B cell (primary cell): ENCODE measurements at regions of chr1 and their contacts with region 1.

Region 1: GRCh38 chr1:84083307-84083706 is 60.8 kb upstream of the PRKACB start:
- DNase-seq: no peak
- ATAC-seq: no peak
- H3K4me3 ChIP-seq: no peak overlapping the region
- H3K4me3 Mint-ChIP-seq: no peak overlapping the region
- H3K27ac ChIP-seq: no peak overlapping the region
- H3K27ac Mint-ChIP-seq: no peak overlapping the region
- H3K4me1 ChIP-seq: peaks cover 7% of the 10 kb centered on the region in 2 donors
- H3K4me1 Mint-ChIP-seq: peaks cover 6% of the 10 kb centered on the region
- H3K27me3 ChIP-seq: no peaks in the 10 kb centered on the region
- H3K27me3 Mint-ChIP-seq: no peaks in the 10 kb centered on the region
- CTCF ChIP-seq: no peak

Region 2: GRCh38 chr1:83043244-83043643 is 1040.1 kb before region 1 on chr1:
- CTCF ChIA-PET with region 1: no interaction called
- POLR2A ChIA-PET with region 1: no interaction called
- intact Hi-C with region 1: loop called (anchors 5 kb)
- DNase-seq: no peak
- ATAC-seq: no peak
- H3K4me3 ChIP-seq: no peak overlapping the region
- H3K4me3 Mint-ChIP-seq: no peak overlapping the region
- H3K27ac ChIP-seq: no peak overlapping the region
- H3K27ac Mint-ChIP-seq: no peak overlapping the region
- H3K4me1 ChIP-seq: no peaks in the 10 kb centered on the region
- H3K4me1 Mint-ChIP-seq: no peaks in the 10 kb centered on the region
- H3K27me3 ChIP-seq: no peaks in the 10 kb centered on the region
- H3K27me3 Mint-ChIP-seq: no peaks in the 10 kb centered on the region
- CTCF ChIP-seq: no peak

Region 3: DNA sequence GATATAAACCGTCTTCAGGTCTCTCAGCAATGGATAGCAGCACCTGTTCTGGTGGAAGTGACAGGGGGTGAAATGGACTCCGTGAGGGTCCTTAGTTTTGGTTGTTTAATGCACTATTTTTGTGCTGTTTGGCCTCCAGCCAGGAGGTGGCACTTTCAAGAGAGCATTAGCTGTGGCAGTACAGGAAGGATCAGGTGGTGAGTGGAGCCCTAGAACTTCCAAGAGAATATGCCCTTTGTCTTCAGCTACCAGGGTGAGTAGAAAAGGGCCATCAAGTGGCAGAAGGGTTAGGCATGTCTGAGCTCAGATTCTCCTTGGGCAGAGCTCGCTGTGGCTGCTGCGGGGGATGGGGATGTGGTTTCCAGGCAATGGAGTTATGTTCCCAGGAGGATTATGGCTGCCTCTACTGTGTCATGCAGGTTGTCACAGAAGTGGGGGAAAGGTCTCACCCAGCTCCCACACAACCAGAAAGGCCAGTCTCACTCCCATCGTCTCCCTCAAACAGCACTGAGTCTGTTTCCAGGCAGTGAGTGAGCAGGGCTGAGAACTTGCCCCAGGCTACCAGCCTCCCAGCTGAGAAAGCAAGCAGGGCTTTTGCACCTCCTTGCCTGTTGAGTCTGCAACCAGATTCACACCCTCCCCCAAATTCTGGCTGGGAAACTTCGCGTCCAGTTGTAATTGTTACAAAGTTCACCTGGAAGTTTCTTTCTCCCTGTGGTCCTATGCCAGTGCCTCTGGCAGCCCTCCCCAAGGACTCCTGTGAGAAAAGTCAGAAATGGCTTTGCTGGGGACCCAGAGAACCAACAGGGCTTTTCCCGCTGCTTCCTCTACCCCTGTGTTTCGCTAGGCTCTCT is 45.3 kb before region 1 on chr1:
- CTCF ChIA-PET with region 1: no interaction called
- POLR2A ChIA-PET with region 1: no interaction called
- intact Hi-C with region 1: no loop called
- DNase-seq: no peak
- ATAC-seq: no peak
- H3K4me3 ChIP-seq: no peak overlapping the region
- H3K4me3 Mint-ChIP-seq: no peak overlapping the region
- H3K27ac ChIP-seq: no peak overlapping the region
- H3K27ac Mint-ChIP-seq: no peak overlapping the region
- H3K4me1 ChIP-seq: no peaks in the 10 kb centered on the region
- H3K4me1 Mint-ChIP-seq: no peaks in the 10 kb centered on the region
- H3K27me3 ChIP-seq: no peaks in the 10 kb centered on the region
- H3K27me3 Mint-ChIP-seq: peaks cover 27% of the 10 kb centered on the region
- CTCF ChIP-seq: no peak